Activated T-helper 2 cell treated with anti-CD3 and anti-CD28 coated beads, Interferon-gamma antibody, Interleukin-2, Interleukin-4, amounts not matched to agents 10 μg/mL and 5 μg/mL and 100 μg/mL, durations not matched to agents 14 hours and 24 hours and 36 hours (primary cell): ENCODE measurements at regions of chr17 and their contacts with region 1.

Region 1: GRCh38 chr17:14300575-14301278 is at the start of gene HS3ST3B1:
- DNase-seq: peak; percentile 99
- H3K4me3 Mint-ChIP-seq: peak within 1 kb of the TSS; percentile 87
- H3K27ac Mint-ChIP-seq: peak within 1 kb of the TSS; percentile 92
- H3K4me1 Mint-ChIP-seq: peaks cover 54% of the 10 kb centered on the region
- H3K27me3 Mint-ChIP-seq: peaks cover 32% of the 10 kb centered on the region
- total RNA-seq, gene HS3ST3B1: 8.6 and 9.8 TPM in 2 replicates

Region 2: GRCh38 chr17:13017659-13018459 is 1282.9 kb before region 1 on chr17 and contains the start of gene ELAC2:
- intact Hi-C with region 1: loop called (anchors 2 kb)
- DNase-seq: peak; percentile 97
- H3K4me3 Mint-ChIP-seq: peak within 1 kb of the TSS; percentile 92
- H3K27ac Mint-ChIP-seq: peak within 1 kb of the TSS; percentile 91
- H3K4me1 Mint-ChIP-seq: peaks cover 26% of the 10 kb centered on the region
- H3K27me3 Mint-ChIP-seq: no peaks in the 10 kb centered on the region
- total RNA-seq, gene ELAC2: 80.7 and 91.2 TPM in 2 replicates

Region 3: GRCh38 chr17:13594762-13595598 is 705.7 kb before region 1 on chr17:
- intact Hi-C with region 1: loop called (anchors 1 kb)
- DNase-seq: peak; percentile 66
- H3K4me3 Mint-ChIP-seq: no peak overlapping the region
- H3K27ac Mint-ChIP-seq: no peak overlapping the region
- H3K4me1 Mint-ChIP-seq: peaks cover 8% of the 10 kb centered on the region
- H3K27me3 Mint-ChIP-seq: peaks cover 52% of the 10 kb centered on the region

Region 4: GRCh38 chr17:14019186-14019956 is 281.4 kb before region 1 on chr17:
- intact Hi-C with region 1: loop called (anchors 10 kb)
- DNase-seq: no peak
- H3K4me3 Mint-ChIP-seq: peak overlapping the region; percentile 19
- H3K27ac Mint-ChIP-seq: peak overlapping the region; percentile 78
- H3K4me1 Mint-ChIP-seq: peaks cover 30% of the 10 kb centered on the region
- H3K27me3 Mint-ChIP-seq: no peaks in the 10 kb centered on the region

Region 5: GRCh38 chr17:14118951-14119350 is 181.8 kb before region 1 on chr17:
- intact Hi-C with region 1: loop called (anchors 1 kb)
- DNase-seq: no peak
- H3K4me3 Mint-ChIP-seq: peak overlapping the region; percentile 59
- H3K27ac Mint-ChIP-seq: peak overlapping the region; percentile 92
- H3K4me1 Mint-ChIP-seq: peaks cover 78% of the 10 kb centered on the region
- H3K27me3 Mint-ChIP-seq: no peaks in the 10 kb centered on the region

Region 6: DNA sequence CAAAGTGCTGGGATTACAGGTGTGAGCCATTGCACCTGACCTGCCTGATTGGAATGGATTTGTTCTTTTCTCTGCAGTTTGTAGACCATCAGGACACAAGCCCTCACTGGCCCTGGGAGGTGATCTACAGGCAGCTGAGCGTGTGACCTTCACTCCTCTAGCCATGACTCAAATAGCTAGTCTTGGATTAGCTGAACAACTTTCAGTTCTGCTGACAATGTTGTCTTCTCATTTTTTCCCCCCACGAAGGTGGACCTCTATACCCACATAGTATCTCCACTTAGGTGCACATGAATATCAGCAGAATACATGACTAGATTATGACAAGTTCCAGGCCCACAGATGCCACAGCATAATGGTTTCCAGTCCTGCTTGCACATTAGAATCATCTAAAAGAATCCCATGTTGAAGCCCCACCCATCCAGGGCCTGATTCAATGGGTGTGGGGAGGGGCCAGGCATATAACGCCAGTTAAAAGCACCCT is 36.9 kb after region 1 on chr17:
- intact Hi-C with region 1: loop called (anchors 1 kb)
- DNase-seq: no peak
- H3K4me3 Mint-ChIP-seq: peak overlapping the region; percentile 20
- H3K27ac Mint-ChIP-seq: peak overlapping the region; percentile 81
- H3K4me1 Mint-ChIP-seq: peaks cover 46% of the 10 kb centered on the region
- H3K27me3 Mint-ChIP-seq: no peaks in the 10 kb centered on the region

Region 7: GRCh38 chr17:14926526-14927122 is 625.9 kb after region 1 on chr17:
- intact Hi-C with region 1: loop called (anchors 10 kb)
- DNase-seq: peak; percentile 11
- H3K4me3 Mint-ChIP-seq: no peak overlapping the region
- H3K27ac Mint-ChIP-seq: no peak overlapping the region
- H3K4me1 Mint-ChIP-seq: no peaks in the 10 kb centered on the region
- H3K27me3 Mint-ChIP-seq: no peaks in the 10 kb centered on the region